ENCODE measurements at regions of chr16 and their contacts with region 1.

Region 1: DNA sequence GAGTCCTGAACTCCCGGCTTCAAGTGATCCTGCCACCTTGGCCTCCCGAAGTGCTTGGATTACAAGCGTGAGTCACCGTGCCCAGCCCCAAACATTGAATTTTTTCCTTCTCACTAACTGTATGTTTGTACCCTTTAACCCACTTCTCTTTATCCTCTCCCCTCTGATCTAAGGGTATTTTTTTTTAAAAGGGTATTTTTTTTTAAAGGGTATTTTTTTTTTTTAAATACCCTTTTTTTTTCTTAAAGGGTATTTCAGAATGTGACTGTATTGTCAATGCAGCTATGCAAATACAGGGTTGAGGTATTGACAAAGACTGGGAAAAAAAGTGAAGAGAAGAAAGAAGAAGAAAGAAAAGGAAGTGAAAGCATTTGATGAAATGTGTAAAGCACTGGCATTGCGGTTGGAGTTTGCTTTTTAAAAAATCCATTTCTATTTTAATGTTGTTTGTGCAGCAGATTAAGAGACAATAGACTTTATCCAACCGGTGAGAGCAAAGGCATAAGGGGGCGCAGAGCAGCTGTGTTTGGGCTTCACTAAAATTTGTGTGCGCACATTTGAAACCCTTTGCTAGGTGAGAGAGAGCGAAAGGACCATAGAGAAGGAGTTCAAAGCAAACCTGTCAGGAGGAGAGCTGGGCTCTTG is 42.4 kb downstream of the SYT17 start:
- DNase-seq: peak; percentile 42
- H3K4me3 Mint-ChIP-seq: no peak overlapping the region
- H3K27ac Mint-ChIP-seq: no peak overlapping the region
- H3K4me1 Mint-ChIP-seq: peaks cover 6% of the 10 kb centered on the region
- H3K27me3 Mint-ChIP-seq: no peaks in the 10 kb centered on the region
- CTCF ChIP-seq: no peak

Region 2: GRCh38 chr16:19020689-19021088 is 189.7 kb before region 1 on chr16:
- CTCF ChIA-PET with region 1: no interaction called
- POLR2A ChIA-PET with region 1: no interaction called
- intact Hi-C with region 1: no loop called
- DNase-seq: no peak
- H3K4me3 Mint-ChIP-seq: no peak overlapping the region
- H3K27ac Mint-ChIP-seq: no peak overlapping the region
- H3K4me1 Mint-ChIP-seq: no peaks in the 10 kb centered on the region
- H3K27me3 Mint-ChIP-seq: no peaks in the 10 kb centered on the region
- CTCF ChIP-seq: no peak

Region 3: DNA sequence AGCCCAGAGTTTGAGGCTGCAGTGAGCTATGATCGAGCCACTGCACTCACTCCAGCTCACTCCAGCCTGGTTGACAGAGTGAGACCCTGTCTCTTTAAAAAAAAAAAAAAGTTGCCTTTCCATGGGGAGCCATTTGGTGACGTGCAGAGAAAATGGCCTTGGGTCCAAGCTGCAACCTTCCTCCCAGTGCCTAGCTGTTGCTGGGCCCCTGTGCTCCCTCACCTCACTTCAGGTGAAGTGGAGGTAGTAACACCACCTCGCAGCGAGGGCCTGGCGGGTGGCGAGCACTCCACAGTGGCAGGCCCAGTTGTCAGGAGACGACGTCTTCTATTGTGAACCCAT is 24.9 kb before region 1 on chr16:
- CTCF ChIA-PET with region 1: no interaction called
- POLR2A ChIA-PET with region 1: no interaction called
- intact Hi-C with region 1: no loop called
- DNase-seq: no peak
- H3K4me3 Mint-ChIP-seq: no peak overlapping the region
- H3K27ac Mint-ChIP-seq: no peak overlapping the region
- H3K4me1 Mint-ChIP-seq: peaks cover 4% of the 10 kb centered on the region
- H3K27me3 Mint-ChIP-seq: no peaks in the 10 kb centered on the region
- CTCF ChIP-seq: no peak

Region 4: GRCh38 chr16:19223235-19224170 is 13.1 kb after region 1 on chr16:
- CTCF ChIA-PET with region 1: interaction called, 11 read pairs
- POLR2A ChIA-PET with region 1: no interaction called
- intact Hi-C with region 1: no loop called
- DNase-seq: peak; percentile 61
- H3K4me3 Mint-ChIP-seq: no peak overlapping the region
- H3K27ac Mint-ChIP-seq: no peak overlapping the region
- H3K4me1 Mint-ChIP-seq: peaks cover 11% of the 10 kb centered on the region
- H3K27me3 Mint-ChIP-seq: peaks cover 3% of the 10 kb centered on the region
- CTCF ChIP-seq: peak; percentile 58